HCT116 (cell line): ENCODE measurements at regions of chr1 and their contacts with region 1.

Region 1: GRCh38 chr1:185670187-185670627 is 64.0 kb upstream of the HMCN1 start:
- DNase-seq: no peak
- ATAC-seq: peak; percentile 78
- H3K4me3 ChIP-seq: no peak overlapping the region
- H3K27ac ChIP-seq: no peak overlapping the region
- H3K4me1 ChIP-seq: no peaks in the 10 kb centered on the region
- H3K27me3 ChIP-seq: no peaks in the 10 kb centered on the region
- CTCF ChIP-seq: peak; percentile 65 to 70 (median 69); a peak in 5 of 6 replicates
- POLR2A ChIP-seq: no peak
- RAD21 ChIP-seq: peak; percentile 81

Region 2: DNA sequence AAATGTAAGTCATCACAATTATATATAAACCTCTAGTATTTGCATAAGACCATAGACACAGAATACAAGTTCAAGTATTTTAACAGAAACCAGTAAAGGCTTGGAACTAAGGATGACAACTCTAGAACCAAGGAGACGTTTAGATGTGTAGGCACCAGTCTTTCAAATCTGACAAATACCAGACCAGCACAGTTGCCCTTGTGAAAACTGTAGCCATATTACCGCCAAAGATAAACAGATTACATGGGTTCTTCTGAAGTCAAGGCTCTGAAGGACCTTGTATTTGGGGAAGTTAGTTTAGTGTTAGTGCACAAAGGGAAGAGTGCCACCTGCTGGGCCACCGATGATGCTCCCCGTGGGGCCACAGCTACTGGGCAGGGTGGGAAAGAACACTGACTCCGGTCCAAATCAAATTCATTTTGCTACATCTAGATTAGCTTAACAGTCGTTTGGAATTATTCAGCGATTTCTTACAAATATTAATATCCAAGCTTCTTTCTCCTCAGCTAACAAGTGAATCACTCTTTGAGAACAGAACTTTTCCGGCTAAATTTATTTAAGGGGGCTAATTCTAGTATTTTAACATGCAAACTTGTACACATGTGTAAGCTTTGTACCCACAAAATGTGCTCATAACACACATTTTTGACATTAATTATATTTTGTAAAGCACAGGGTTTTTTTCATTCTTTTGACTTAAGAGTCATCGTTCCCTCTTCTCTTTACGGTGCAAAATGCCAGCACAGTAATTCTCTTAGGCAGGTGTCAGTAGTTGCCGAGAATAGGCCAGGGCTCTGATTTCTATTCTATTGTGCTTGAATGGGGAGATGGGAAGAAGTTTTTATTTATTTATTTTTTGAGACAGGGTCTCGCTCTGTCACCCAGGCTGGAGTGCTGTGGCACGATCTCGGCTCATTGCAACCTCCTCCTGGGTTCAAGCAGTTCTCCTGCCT is 687.9 kb before region 1 on chr1:
- CTCF ChIA-PET with region 1: interaction called, 5 read pairs
- POLR2A ChIA-PET with region 1: no interaction called
- RAD21 ChIA-PET with region 1: no interaction called
- intact Hi-C with region 1: loop called (anchors 10 kb)
- DNase-seq: peak; percentile 37
- ATAC-seq: peak; percentile 99
- H3K4me3 ChIP-seq: no peak overlapping the region
- H3K27ac ChIP-seq: no peak overlapping the region
- H3K4me1 ChIP-seq: no peaks in the 10 kb centered on the region
- H3K27me3 ChIP-seq: no peaks in the 10 kb centered on the region
- CTCF ChIP-seq: peak; percentile 67 to 86 (median 85)
- POLR2A ChIP-seq: no peak
- RAD21 ChIP-seq: peak; percentile 87

Region 3: DNA sequence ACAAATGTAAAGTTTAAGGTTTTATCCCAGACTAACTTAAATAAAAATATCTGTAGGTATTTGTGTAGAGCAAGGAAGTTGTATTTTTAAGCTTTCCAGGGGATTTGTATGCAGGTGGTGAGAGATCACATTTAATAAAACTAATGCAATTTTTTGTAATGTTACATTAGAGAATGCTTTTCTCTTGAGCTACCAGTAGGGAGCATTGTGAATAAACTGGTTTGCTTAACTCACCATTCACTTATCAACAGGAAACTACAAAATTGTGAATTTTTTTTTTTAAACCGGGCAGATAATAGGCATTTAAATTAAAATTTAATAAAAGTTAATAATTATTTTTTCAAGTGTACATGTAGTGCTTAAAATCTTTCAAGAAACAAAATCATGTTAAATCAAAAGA is 431.8 kb before region 1 on chr1:
- CTCF ChIA-PET with region 1: interaction called, 10 read pairs
- POLR2A ChIA-PET with region 1: no interaction called
- RAD21 ChIA-PET with region 1: interaction called in 1 of 2 experiments, 3 read pairs
- intact Hi-C with region 1: loop called (anchors 5 kb)
- DNase-seq: peak; percentile 7
- ATAC-seq: 0 out of 2 replicates have a peak, but pooled peaks have one; percentile 47
- H3K4me3 ChIP-seq: no peak overlapping the region
- H3K27ac ChIP-seq: no peak overlapping the region
- H3K4me1 ChIP-seq: no peaks in the 10 kb centered on the region
- H3K27me3 ChIP-seq: no peaks in the 10 kb centered on the region
- CTCF ChIP-seq: peak; percentile 37 to 38 (median 37); a peak in 4 of 6 replicates
- POLR2A ChIP-seq: no peak
- RAD21 ChIP-seq: peak; percentile 60

Region 4: GRCh38 chr1:185595835-185596667 is 74.2 kb before region 1 on chr1:
- CTCF ChIA-PET with region 1: interaction called, 14 read pairs
- POLR2A ChIA-PET with region 1: no interaction called
- RAD21 ChIA-PET with region 1: interaction called, 3 to 4 read pairs
- intact Hi-C with region 1: no loop called
- DNase-seq: peak; percentile 51
- ATAC-seq: peak; percentile 98
- H3K4me3 ChIP-seq: no peak overlapping the region
- H3K27ac ChIP-seq: no peak overlapping the region
- H3K4me1 ChIP-seq: no peaks in the 10 kb centered on the region
- H3K27me3 ChIP-seq: no peaks in the 10 kb centered on the region
- CTCF ChIP-seq: peak; percentile 45 to 88 (median 86); a peak in 5 of 6 replicates
- POLR2A ChIP-seq: no peak
- RAD21 ChIP-seq: peak; percentile 62